Mammary epithelial cell (primary cell): ENCODE measurements at regions of chr3 and their contacts with region 1.

Region 1: DNA sequence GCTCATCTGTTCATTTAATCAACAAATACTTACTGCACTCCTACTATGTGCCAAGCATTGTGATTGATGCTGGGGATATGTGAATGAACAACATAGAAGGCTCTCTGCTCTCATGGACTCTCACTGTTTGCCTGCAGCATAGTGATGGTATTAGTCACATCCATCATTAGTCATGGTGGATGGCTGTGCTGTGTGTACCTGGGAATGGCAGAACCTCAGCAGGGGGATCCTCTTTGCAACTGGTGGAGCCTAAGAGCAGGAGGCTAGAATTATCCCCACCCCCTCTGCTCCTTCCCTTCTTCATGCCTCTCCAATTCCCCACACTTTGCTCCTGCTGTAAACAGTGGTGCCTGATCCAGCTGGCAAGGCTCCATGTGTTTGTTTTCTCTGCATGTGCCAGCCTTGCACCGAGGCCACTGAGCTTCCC is 20.5 kb downstream of the BOC start:
- DNase-seq: peak; percentile 89
- H3K4me3 ChIP-seq: no peak overlapping the region
- H3K27ac ChIP-seq: peak overlapping the region; percentile 93
- H3K4me1 ChIP-seq: peaks cover 43% of the 10 kb centered on the region
- H3K27me3 ChIP-seq: no peaks in the 10 kb centered on the region
- CTCF ChIP-seq: no peak

Region 2: DNA sequence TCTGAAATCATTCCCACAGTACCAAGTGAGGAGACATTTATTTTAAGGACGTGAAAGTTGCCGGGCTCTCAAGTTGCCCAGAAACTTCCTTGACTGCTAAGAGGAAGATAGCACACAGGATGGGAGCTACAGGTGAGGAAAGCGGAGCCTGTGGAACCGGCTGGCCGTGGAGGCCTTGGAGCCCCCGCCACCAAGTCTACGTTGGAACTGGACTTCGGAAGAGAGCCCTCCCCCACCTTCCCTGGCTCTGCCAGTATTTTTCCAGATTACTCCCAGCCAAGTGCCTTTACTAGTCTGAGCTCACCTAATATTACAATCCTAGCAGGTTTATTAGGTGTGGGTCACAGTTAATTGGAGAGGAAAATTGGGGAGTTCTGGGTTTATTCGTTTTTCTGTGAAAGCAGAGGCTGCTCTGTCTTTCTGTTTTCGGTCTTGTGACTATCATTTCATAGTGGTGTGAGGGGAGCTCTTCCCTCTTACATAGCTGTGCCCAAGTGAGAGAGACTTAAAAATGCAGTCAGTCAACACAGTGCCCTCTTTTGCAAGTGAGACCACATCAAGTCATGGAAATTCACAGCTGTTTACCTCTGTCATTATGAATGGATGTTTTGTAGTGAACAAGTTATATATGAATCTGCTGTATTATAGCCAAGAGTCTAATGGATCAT is 13.7 kb before region 1 on chr3:
- CTCF ChIA-PET with region 1: no interaction called
- dilution Hi-C with region 1: no loop called
- in situ Hi-C with region 1: no loop called
- intact Hi-C with region 1: no loop called
- DNase-seq: no peak
- H3K4me3 ChIP-seq: no peak overlapping the region
- H3K27ac ChIP-seq: no peak overlapping the region
- H3K4me1 ChIP-seq: peaks cover 26% of the 10 kb centered on the region
- H3K27me3 ChIP-seq: no peaks in the 10 kb centered on the region
- CTCF ChIP-seq: no peak

Region 3: GRCh38 chr3:113249111-113249510 is 17.3 kb after region 1 on chr3:
- CTCF ChIA-PET with region 1: no interaction called
- dilution Hi-C with region 1: no loop called
- in situ Hi-C with region 1: no loop called
- intact Hi-C with region 1: loop called (anchors 1 kb)
- DNase-seq: peak; percentile 84
- H3K4me3 ChIP-seq: no peak overlapping the region
- H3K27ac ChIP-seq: peak overlapping the region; percentile 69
- H3K4me1 ChIP-seq: peaks cover 33% of the 10 kb centered on the region
- H3K27me3 ChIP-seq: no peaks in the 10 kb centered on the region
- CTCF ChIP-seq: no peak

Region 4: GRCh38 chr3:113275929-113276750 is 44.3 kb after region 1 on chr3:
- CTCF ChIA-PET with region 1: no interaction called
- dilution Hi-C with region 1: no loop called
- in situ Hi-C with region 1: no loop called
- intact Hi-C with region 1: loop called (anchors 1 kb)
- DNase-seq: peak; percentile 70
- H3K4me3 ChIP-seq: peak overlapping the region in 1 of 3 experiments; percentile 20
- H3K27ac ChIP-seq: peak overlapping the region; percentile 4
- H3K4me1 ChIP-seq: peaks cover 17% of the 10 kb centered on the region
- H3K27me3 ChIP-seq: no peaks in the 10 kb centered on the region
- CTCF ChIP-seq: peak; percentile 14 to 21